A549 (cell line): ENCODE measurements at regions of chr1 and their contacts with region 1.

Region 1: GRCh38 chr1:161192476-161193465 is 6.1 kb downstream of the ADAMTS4 start:
- DNase-seq: peak; percentile 72 to 84
- ATAC-seq: peak; percentile 88 to 93
- H3K4me3 ChIP-seq: no peak overlapping the region
- H3K27ac ChIP-seq: no peak overlapping the region
- H3K4me1 ChIP-seq: no peaks in the 10 kb centered on the region
- CTCF ChIP-seq: peak; percentile 81
- EP300 ChIP-seq: no peak
- POLR2A ChIP-seq: no peak
- RAD21 ChIP-seq: peak; percentile 62 to 73

Region 2: GRCh38 chr1:161177112-161177935 is 15.4 kb before region 1 on chr1 and contains the start of gene B4GALT3:
- CTCF ChIA-PET with region 1: interaction called, 49 read pairs
- POLR2A ChIA-PET with region 1: no interaction called
- DNase-seq: peak; percentile 81 to 93
- ATAC-seq: peak; percentile 91 to 96
- H3K4me3 ChIP-seq: peak within 1 kb of the TSS; percentile 63
- H3K27ac ChIP-seq: peak within 1 kb of the TSS; percentile 83 to 91
- H3K4me1 ChIP-seq: peaks cover 16% of the 10 kb centered on the region
- CTCF ChIP-seq: no peak
- EP300 ChIP-seq: no peak
- POLR2A ChIP-seq: peak; percentile 98
- RAD21 ChIP-seq: no peak
- polyA plus RNA-seq, gene B4GALT3: 25.3 and 31.4 TPM in 2 replicates

Region 3: GRCh38 chr1:161209790-161210409 is 17.1 kb after region 1 on chr1:
- CTCF ChIA-PET with region 1: interaction called, 93 read pairs
- POLR2A ChIA-PET with region 1: no interaction called
- DNase-seq: peak; percentile 77 to 90
- ATAC-seq: peak; percentile 95 to 98
- H3K4me3 ChIP-seq: no peak overlapping the region
- H3K27ac ChIP-seq: no peak overlapping the region
- H3K4me1 ChIP-seq: 0 out of 3 replicates have a peak, but pooled peaks cover 3% of the 10 kb centered on the region
- CTCF ChIP-seq: peak; percentile 83
- EP300 ChIP-seq: no peak
- POLR2A ChIP-seq: no peak
- RAD21 ChIP-seq: peak; percentile 78 to 79

Region 4: GRCh38 chr1:161374373-161374772 is 181.6 kb after region 1 on chr1:
- CTCF ChIA-PET with region 1: interaction called, 200 read pairs
- POLR2A ChIA-PET with region 1: no interaction called
- DNase-seq: peak; percentile 23 to 29
- ATAC-seq: peak; percentile 66 to 85; a peak in 5 of 6 replicates
- H3K4me3 ChIP-seq: no peak overlapping the region
- H3K27ac ChIP-seq: no peak overlapping the region
- H3K4me1 ChIP-seq: peaks cover 9% of the 10 kb centered on the region; the same call in 2 of the 3 replicates
- CTCF ChIP-seq: peak; percentile 35; the same call in 2 of the 3 replicates
- EP300 ChIP-seq: no peak
- POLR2A ChIP-seq: no peak
- RAD21 ChIP-seq: peak; percentile 59 to 69; a peak in 4 of 5 replicates